Activated CD4-positive, alpha-beta memory T cell treated with anti-CD3 and anti-CD28 coated beads for 36 hours (primary cell): ENCODE measurements at regions of chr11 and their contacts with region 1.

Region 1: GRCh38 chr11:128323381-128323780 is 264.0 kb downstream of the ETS1 start:
- DNase-seq: peak; percentile 65
- H3K4me3 Mint-ChIP-seq: peak overlapping the region; percentile 36
- H3K27ac Mint-ChIP-seq: peak overlapping the region; percentile 94
- H3K4me1 Mint-ChIP-seq: peaks cover 88% of the 10 kb centered on the region
- H3K27me3 Mint-ChIP-seq: no peaks in the 10 kb centered on the region

Region 2: GRCh38 chr11:128302425-128303186 is 20.8 kb before region 1 on chr11:
- CTCF ChIA-PET with region 1: interaction called, 32 read pairs
- POLR2A ChIA-PET with region 1: interaction called, 28 read pairs
- intact Hi-C with region 1: loop called (anchors 1 kb)
- DNase-seq: peak; percentile 81
- H3K4me3 Mint-ChIP-seq: peak overlapping the region; percentile 79
- H3K27ac Mint-ChIP-seq: peak overlapping the region; percentile 94
- H3K4me1 Mint-ChIP-seq: peaks cover 78% of the 10 kb centered on the region
- H3K27me3 Mint-ChIP-seq: no peaks in the 10 kb centered on the region

Region 3: GRCh38 chr11:128367573-128367972 is 44.2 kb after region 1 on chr11:
- CTCF ChIA-PET with region 1: no interaction called
- POLR2A ChIA-PET with region 1: no interaction called
- intact Hi-C with region 1: loop called (anchors 2 kb)
- DNase-seq: peak; percentile 75
- H3K4me3 Mint-ChIP-seq: peak overlapping the region; percentile 30
- H3K27ac Mint-ChIP-seq: no peak overlapping the region
- H3K4me1 Mint-ChIP-seq: peaks cover 24% of the 10 kb centered on the region
- H3K27me3 Mint-ChIP-seq: no peaks in the 10 kb centered on the region

Region 4: DNA sequence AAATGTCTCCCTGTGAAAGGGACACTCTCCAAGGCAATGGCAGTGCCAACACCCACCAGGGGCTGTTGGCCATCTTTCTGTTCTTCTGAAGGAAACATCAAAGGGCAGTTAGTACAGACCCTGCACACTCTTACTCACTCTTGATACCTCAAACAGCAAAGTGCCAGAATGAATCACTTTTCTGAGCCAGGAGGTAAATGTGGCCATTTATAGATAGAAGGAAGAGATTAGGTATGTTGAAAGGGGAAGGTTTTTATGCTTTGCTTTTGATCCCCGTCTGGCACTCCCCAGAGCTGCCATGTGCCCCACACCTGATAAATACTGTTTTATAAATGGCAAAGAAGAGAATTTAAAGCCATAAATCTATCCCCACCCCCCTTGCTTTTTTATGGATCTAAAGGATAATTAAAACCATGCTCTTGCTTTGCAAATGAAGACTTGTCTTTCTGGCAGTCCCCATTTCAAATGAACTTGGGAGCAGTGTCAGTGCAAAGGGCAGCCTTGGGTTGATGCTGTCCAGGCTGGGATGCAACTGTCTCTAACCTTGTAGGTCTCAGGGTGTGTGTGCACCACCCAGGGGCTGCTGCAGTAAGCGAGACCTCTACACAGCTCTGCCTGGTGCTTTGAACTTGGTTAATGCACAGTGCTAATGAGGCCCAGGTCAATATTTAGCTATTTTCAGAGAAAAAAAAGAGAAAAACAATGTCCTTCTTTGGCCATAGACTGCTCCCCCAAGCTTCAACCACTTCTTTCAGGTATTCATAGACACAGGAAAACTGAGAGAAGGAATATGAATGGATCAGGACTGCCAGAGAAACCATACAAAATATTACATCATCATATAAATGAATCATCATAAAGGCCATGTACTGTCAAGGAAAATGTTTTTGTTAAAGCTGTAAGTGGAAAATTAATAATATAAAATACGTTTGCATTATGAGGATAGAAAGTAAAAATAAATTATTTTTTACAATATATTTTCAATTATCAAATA is 56.5 kb after region 1 on chr11:
- CTCF ChIA-PET with region 1: interaction called, 3 read pairs
- POLR2A ChIA-PET with region 1: interaction called, 3 read pairs
- intact Hi-C with region 1: loop called (anchors 1 kb)
- DNase-seq: peak; percentile 57
- H3K4me3 Mint-ChIP-seq: peak overlapping the region; percentile 11
- H3K27ac Mint-ChIP-seq: peak overlapping the region; percentile 56
- H3K4me1 Mint-ChIP-seq: peaks cover 41% of the 10 kb centered on the region
- H3K27me3 Mint-ChIP-seq: no peaks in the 10 kb centered on the region

Region 5: GRCh38 chr11:128422576-128423370 is 99.4 kb after region 1 on chr11:
- CTCF ChIA-PET with region 1: interaction called, 8 read pairs
- POLR2A ChIA-PET with region 1: interaction called, 7 read pairs
- intact Hi-C with region 1: loop called (anchors 1 kb)
- DNase-seq: peak; percentile 95
- H3K4me3 Mint-ChIP-seq: peak overlapping the region; percentile 49
- H3K27ac Mint-ChIP-seq: peak overlapping the region; percentile 65
- H3K4me1 Mint-ChIP-seq: peaks cover 34% of the 10 kb centered on the region
- H3K27me3 Mint-ChIP-seq: no peaks in the 10 kb centered on the region

Region 6: DNA sequence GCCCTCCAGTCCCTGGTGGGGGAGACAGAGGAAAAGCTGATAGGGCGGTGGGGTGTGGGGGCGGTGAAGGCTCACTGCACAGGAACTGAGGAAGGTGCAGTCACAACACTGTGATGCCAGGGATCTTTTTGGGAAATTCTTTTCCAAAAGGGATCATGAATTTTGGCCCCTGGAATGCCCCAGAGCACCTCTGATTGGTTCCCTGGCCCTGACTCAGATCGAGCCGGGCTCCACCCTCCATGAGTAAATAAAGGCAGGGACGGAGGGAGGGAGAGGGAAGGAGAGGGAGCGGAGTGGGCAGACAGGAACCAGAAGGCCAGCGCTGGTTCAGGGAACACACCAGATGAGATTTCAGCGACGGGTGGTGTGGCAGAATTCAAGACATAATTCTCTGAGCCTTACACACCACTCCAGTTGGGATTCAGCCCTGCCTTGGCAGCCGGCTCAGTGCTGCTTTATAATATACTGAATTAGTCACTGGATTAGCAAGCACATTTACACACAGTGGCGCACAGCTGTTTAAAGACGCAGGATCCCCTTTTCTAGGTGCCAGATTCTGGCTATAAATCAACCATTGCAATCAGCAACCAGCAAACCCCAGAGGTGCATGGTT is 183.7 kb after region 1 on chr11:
- CTCF ChIA-PET with region 1: interaction called, 10 read pairs
- POLR2A ChIA-PET with region 1: interaction called, 10 read pairs
- intact Hi-C with region 1: no loop called
- DNase-seq: peak; percentile 74
- H3K4me3 Mint-ChIP-seq: peak overlapping the region; percentile 77
- H3K27ac Mint-ChIP-seq: peak overlapping the region; percentile 96
- H3K4me1 Mint-ChIP-seq: peaks cover 90% of the 10 kb centered on the region
- H3K27me3 Mint-ChIP-seq: no peaks in the 10 kb centered on the region

Region 7: GRCh38 chr11:128624269-128625175 is 301.1 kb after region 1 on chr11:
- CTCF ChIA-PET with region 1: no interaction called
- POLR2A ChIA-PET with region 1: interaction called, 5 read pairs
- intact Hi-C with region 1: loop called (anchors 10 kb)
- DNase-seq: peak; percentile 83
- H3K4me3 Mint-ChIP-seq: peak overlapping the region; percentile 57
- H3K27ac Mint-ChIP-seq: peak overlapping the region; percentile 94
- H3K4me1 Mint-ChIP-seq: peaks cover 95% of the 10 kb centered on the region
- H3K27me3 Mint-ChIP-seq: no peaks in the 10 kb centered on the region